ENCODE measurements at regions of chr6 and their contacts with region 1.

Region 1: GRCh38 chr6:136643850-136644596 is 93.8 kb upstream of the MAP7 start:
- DNase-seq: peak; percentile 64 to 96
- H3K4me3 ChIP-seq: no peak overlapping the region
- H3K27ac ChIP-seq: no peak overlapping the region
- H3K4me1 ChIP-seq: peaks cover 0 to 8% (median 1%) of the 10 kb centered on the region in 4 experiments; a peak in 2 of 7 replicates
- H3K27me3 ChIP-seq: no peaks in the 10 kb centered on the region
- CTCF ChIP-seq: peak; percentile 87 to 98 (median 95)
- EP300 ChIP-seq: no peak; a peak in 1 of 3 replicates
- POLR2A ChIP-seq: no peak
- RAD21 ChIP-seq: peak; percentile 93 to 98

Region 2: DNA sequence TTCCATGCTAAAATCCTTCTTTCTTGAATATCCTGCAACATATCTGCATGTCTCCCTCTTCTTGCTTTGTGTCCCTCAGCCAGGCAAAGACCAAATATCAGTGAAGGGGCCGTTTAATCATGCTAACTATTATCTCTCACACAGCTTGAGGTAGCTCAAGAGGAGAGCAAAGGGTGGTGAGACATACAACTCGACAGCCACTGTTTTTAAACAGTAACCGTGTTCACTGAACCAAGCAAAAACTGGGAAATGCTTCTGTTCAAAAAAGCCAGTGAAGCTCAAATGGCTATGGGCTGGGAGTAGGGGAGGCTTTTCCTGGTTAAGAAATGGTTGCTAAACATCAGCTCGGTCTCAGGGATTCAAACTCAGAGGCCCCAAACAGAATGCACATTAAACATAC is 177.2 kb before region 1 on chr6:
- CTCF ChIA-PET with region 1: no interaction called
- POLR2A ChIA-PET with region 1: no interaction called
- DNase-seq: no peak
- H3K4me3 ChIP-seq: no peak overlapping the region
- H3K27ac ChIP-seq: 0 out of 2 replicates have a peak overlapping the region, but pooled peaks have one; percentile 12
- H3K4me1 ChIP-seq: peaks cover 0 to 16% (median 9%) of the 10 kb centered on the region in 4 experiments; a peak in 5 of 7 replicates
- H3K27me3 ChIP-seq: no peaks in the 10 kb centered on the region
- CTCF ChIP-seq: no peak
- EP300 ChIP-seq: no peak
- POLR2A ChIP-seq: no peak
- RAD21 ChIP-seq: no peak

Region 3: DNA sequence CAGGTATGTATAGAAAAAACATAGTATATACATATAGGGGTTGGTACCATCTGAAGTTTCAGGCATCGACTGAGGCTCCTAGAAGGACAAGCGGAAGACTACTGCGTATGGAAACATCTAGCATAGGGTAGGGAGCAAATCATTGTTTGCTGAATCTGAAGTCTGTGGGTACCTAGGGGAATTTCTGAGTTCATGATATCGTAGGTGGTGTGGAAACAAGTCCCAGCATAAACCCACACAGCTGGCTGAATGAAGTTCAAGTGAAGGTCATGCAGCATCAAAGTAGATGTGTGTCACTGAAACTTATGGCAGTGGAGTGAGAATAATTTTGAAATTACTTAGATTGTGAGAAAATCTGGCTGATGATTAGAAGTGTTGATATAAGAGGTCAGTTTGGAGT is 133.2 kb before region 1 on chr6:
- CTCF ChIA-PET with region 1: no interaction called
- POLR2A ChIA-PET with region 1: no interaction called
- DNase-seq: peak in 1 of 2 experiments; percentile 1
- H3K4me3 ChIP-seq: no peak overlapping the region
- H3K27ac ChIP-seq: no peak overlapping the region
- H3K4me1 ChIP-seq: peaks cover 0 to 13% (median 4%) of the 10 kb centered on the region in 4 experiments; a peak in 3 of 7 replicates
- H3K27me3 ChIP-seq: no peaks in the 10 kb centered on the region
- CTCF ChIP-seq: no peak
- EP300 ChIP-seq: no peak
- POLR2A ChIP-seq: no peak
- RAD21 ChIP-seq: no peak

Region 4: GRCh38 chr6:136614994-136615393 is 29.0 kb before region 1 on chr6:
- CTCF ChIA-PET with region 1: interaction called, 17 read pairs
- POLR2A ChIA-PET with region 1: no interaction called
- DNase-seq: no peak
- H3K4me3 ChIP-seq: no peak overlapping the region
- H3K27ac ChIP-seq: no peak overlapping the region
- H3K4me1 ChIP-seq: peaks cover 0 to 10% (median 1%) of the 10 kb centered on the region in 4 experiments; a peak in 4 of 7 replicates
- H3K27me3 ChIP-seq: no peaks in the 10 kb centered on the region
- CTCF ChIP-seq: no peak
- EP300 ChIP-seq: no peak
- POLR2A ChIP-seq: no peak
- RAD21 ChIP-seq: no peak

Region 5: GRCh38 chr6:136657666-136658065 is 13.6 kb after region 1 on chr6:
- CTCF ChIA-PET with region 1: interaction called, 26 read pairs
- POLR2A ChIA-PET with region 1: no interaction called
- DNase-seq: no peak
- H3K4me3 ChIP-seq: no peak overlapping the region
- H3K27ac ChIP-seq: no peak overlapping the region
- H3K4me1 ChIP-seq: no peaks in the 10 kb centered on the region
- H3K27me3 ChIP-seq: no peaks in the 10 kb centered on the region
- CTCF ChIP-seq: no peak
- EP300 ChIP-seq: no peak
- POLR2A ChIP-seq: no peak
- RAD21 ChIP-seq: no peak

Region 6: DNA sequence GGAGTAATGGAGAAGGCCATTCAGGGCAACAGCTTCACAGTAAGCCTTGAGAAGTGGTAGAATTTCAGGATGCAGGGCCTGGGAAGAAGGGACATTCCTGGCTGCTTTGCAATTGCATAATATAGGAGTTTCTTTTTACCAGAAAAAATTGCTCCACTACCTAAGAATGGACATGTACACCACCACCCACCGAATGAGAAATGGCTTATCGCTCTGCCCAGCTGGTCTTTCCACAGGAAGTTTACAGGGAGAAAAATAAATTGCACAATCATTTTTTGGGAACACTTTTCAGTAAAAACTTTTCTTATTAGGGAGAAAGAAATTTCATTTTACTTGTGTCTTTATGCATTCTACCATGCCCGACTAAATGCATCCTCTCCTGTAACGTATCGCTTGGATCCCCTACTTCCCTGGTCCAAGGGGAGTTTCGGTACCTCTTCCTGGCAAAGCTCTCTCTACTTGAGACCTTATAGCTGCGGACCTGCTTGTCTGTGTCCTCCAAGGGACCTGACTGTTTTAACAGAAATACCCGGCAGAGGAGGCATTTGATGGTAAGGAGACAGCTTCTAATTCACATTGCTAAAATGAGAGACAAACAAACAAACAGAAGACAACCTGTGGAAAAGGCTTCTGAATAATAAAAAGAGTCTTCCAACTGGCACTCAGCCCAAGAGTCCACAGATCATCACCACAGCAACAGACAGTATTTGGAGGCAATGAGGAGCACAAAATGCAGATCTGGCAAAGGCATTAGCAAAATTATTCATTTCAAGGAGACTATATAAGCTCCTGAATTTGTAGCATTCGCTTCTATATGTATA is 94.1 kb after region 1 on chr6:
- CTCF ChIA-PET with region 1: interaction called, 16 read pairs
- POLR2A ChIA-PET with region 1: no interaction called
- DNase-seq: no peak
- H3K4me3 ChIP-seq: no peak overlapping the region
- H3K27ac ChIP-seq: no peak overlapping the region
- H3K4me1 ChIP-seq: no peaks in the 10 kb centered on the region
- H3K27me3 ChIP-seq: no peaks in the 10 kb centered on the region
- CTCF ChIP-seq: no peak
- EP300 ChIP-seq: no peak
- POLR2A ChIP-seq: no peak
- RAD21 ChIP-seq: no peak

Region 7: GRCh38 chr6:136822376-136823127 is 178.5 kb after region 1 on chr6 and contains the start of gene PEX7:
- CTCF ChIA-PET with region 1: interaction called, 10 read pairs
- POLR2A ChIA-PET with region 1: no interaction called
- DNase-seq: peak; percentile 69 to 93
- H3K4me3 ChIP-seq: peak within 1 kb of the TSS; percentile 56 to 81 (median 60)
- H3K27ac ChIP-seq: peak within 1 kb of the TSS; percentile 84
- H3K4me1 ChIP-seq: peaks cover 0 to 7% (median 3%) of the 10 kb centered on the region in 4 experiments; a peak in 3 of 7 replicates
- H3K27me3 ChIP-seq: no peaks in the 10 kb centered on the region; a peak in 2 of 7 replicates
- CTCF ChIP-seq: peak; percentile 67 to 81 (median 69)
- EP300 ChIP-seq: no peak
- POLR2A ChIP-seq: peak in 1 of 2 experiments; percentile 81; a peak in 2 of 3 replicates
- RAD21 ChIP-seq: peak; percentile 41 to 59; a peak in 3 of 4 replicates
- total RNA-seq, gene PEX7: 6.4 and 6.7 TPM in 2 replicates

Region 8: DNA sequence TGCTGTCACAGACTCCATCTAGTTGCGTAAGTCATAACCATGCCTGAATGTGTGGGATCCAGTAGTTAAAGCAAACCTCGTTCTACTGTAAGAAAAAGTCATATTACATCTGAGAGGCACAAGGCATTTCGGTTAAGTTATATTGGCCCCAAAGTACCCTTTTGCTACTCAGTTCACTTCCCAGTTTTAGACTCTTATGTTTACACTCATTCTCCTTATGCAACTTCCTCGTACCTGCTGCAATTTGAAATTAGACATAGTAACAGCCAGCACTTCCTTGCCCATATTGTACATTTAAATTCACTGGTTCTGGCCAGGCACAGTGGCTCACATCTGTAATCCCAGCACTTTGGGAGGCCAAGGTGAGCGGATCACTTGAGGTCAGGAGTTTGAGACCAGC is 215.4 kb after region 1 on chr6:
- CTCF ChIA-PET with region 1: no interaction called
- POLR2A ChIA-PET with region 1: no interaction called
- DNase-seq: no peak
- H3K4me3 ChIP-seq: no peak overlapping the region
- H3K27ac ChIP-seq: no peak overlapping the region
- H3K4me1 ChIP-seq: no peaks in the 10 kb centered on the region
- H3K27me3 ChIP-seq: no peaks in the 10 kb centered on the region
- CTCF ChIP-seq: no peak
- EP300 ChIP-seq: no peak
- POLR2A ChIP-seq: no peak
- RAD21 ChIP-seq: no peak

Region 9: DNA sequence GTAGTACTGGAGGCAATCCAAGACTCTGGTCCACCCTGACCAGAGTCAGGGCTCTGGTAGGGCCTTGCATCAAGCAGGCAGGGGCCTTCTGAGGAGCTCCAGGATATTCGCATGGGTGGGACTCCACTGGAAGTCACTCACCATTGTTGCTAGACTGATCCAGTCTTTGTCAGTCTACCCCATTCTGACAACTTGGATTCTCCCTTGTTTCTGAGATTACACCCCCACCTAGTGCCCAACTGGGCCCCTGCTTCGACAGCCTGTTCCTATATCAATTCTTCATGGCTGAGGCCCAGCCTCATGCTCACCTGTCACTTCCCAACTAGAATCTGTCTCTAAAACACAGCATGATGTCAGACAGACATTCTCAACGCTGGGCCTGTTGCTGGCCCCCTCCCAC is 283.3 kb after region 1 on chr6:
- CTCF ChIA-PET with region 1: interaction called, 19 read pairs
- POLR2A ChIA-PET with region 1: no interaction called
- DNase-seq: peak in 1 of 2 experiments; percentile 57
- H3K4me3 ChIP-seq: no peak overlapping the region
- H3K27ac ChIP-seq: no peak overlapping the region
- H3K4me1 ChIP-seq: peaks cover 0 to 11% (median 3%) of the 10 kb centered on the region in 4 experiments; a peak in 6 of 7 replicates
- H3K27me3 ChIP-seq: peaks cover 12 to 24% (median 21%) of the 10 kb centered on the region in 4 experiments
- CTCF ChIP-seq: peak; percentile 44 to 71 (median 69)
- EP300 ChIP-seq: no peak
- POLR2A ChIP-seq: no peak
- RAD21 ChIP-seq: peak; percentile 81 to 87

Measured in H1 (cell line).